Caco-2 (cell line): ENCODE measurements at regions of chr14 and their contacts with region 1.

Region 1: DNA sequence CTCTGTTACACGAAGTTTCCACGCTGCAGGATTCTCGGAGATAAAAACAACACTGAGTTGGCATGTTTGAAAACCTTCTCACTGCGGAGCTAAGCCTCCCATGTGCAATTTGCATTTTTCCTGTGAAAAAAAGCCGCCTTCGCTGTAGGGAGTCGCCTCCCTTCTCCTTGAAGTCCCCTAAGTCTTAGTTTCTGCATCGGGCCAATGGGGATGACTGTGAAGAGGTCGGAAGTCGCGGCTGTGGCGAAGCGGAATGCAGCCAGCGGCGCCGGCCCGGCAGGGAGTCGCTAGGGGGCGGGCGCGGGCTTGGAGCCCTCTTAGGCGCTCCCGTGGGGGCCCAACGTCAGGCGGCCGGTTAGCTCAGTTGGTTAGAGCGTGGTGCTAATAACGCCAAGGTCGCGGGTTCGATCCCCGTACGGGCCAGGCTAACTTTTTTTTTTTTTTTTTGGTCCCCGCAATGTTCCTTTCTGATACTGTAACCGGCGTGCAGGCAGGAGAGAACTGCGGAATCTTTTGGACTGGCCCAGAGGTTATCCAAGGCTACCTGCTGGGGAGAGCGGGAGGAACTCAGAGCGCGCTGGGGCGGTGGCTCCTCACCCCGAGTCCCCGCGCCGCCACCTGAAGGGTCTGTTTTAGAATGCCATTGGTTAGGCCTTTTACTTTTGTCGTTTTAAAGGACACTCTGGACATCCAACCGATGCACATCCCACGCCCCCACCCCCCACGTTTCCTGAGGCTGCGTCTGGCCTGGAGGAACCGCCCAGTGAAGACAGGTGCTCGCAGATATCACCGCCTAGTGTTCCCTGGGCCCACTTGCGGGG is 2.6 kb upstream of the ZNF839 start:
- DNase-seq: peak; percentile 93 to 96
- H3K4me3 ChIP-seq: peak overlapping the region; percentile 55
- H3K4me3 Mint-ChIP-seq: peak overlapping the region; percentile 89
- H3K27ac Mint-ChIP-seq: peak overlapping the region; percentile 94
- H3K4me1 ChIP-seq: peaks cover 30% of the 10 kb centered on the region
- H3K4me1 Mint-ChIP-seq: peaks cover 32% of the 10 kb centered on the region
- H3K27me3 ChIP-seq: no peaks in the 10 kb centered on the region
- H3K27me3 Mint-ChIP-seq: no peaks in the 10 kb centered on the region
- CTCF ChIP-seq: peak; percentile 72 to 88

Region 2: DNA sequence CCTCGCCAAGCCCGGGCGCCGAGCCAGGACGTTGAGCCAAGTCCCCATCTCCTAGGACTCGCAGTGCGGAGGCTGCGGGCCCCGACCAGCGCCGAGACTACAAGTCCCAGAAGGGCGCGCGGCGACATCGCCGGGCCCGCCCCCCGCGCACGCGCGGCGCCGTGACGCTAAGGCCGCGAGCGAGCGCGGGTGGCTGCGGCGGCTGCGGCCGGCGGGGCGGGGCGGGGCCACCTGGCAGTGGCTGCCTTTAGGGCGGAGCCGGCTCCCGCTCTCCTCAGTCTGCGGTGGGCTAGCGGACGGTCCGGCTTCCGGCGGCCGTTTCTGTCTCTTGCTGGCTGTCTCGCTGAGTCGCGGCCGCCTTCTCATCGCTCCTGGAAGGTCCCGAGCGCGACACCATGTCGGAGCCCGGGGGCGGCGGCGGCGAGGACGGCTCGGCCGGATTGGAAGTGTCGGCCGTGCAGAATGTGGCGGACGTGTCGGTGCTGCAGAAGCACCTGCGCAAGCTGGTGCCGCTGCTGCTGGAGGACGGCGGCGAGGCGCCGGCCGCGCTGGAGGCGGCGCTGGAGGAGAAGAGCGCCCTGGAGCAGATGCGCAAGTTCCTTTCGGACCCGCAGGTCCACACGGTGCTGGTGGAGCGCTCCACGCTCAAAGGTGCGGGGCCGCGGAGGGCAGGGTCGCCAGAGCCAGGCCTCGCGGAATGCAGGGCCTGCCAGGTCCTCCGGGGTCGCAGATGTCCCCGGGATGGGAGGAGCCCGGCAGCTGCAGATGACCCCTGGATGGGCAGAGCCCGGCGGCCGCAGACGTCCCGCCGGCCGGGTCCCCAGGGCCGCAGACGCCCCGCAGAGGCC is 352.4 kb before region 1 on chr14 and contains the start of gene DYNC1H1:
- CTCF ChIA-PET with region 1: interaction called, 4 read pairs
- POLR2A ChIA-PET with region 1: no interaction called
- intact Hi-C with region 1: loop called (anchors 5 kb)
- DNase-seq: peak; percentile 84 to 93
- H3K4me3 ChIP-seq: peak within 1 kb of the TSS; percentile 84
- H3K4me3 Mint-ChIP-seq: peak within 1 kb of the TSS; percentile 79
- H3K27ac Mint-ChIP-seq: peak within 1 kb of the TSS; percentile 42
- H3K4me1 ChIP-seq: peaks cover 21% of the 10 kb centered on the region
- H3K4me1 Mint-ChIP-seq: peaks cover 12% of the 10 kb centered on the region
- H3K27me3 ChIP-seq: no peaks in the 10 kb centered on the region
- H3K27me3 Mint-ChIP-seq: no peaks in the 10 kb centered on the region
- CTCF ChIP-seq: no peak
- total RNA-seq, gene DYNC1H1: 349 and 351 TPM in 2 replicates

Region 3: GRCh38 chr14:102078831-102079699 is 237.9 kb before region 1 on chr14:
- CTCF ChIA-PET with region 1: no interaction called
- POLR2A ChIA-PET with region 1: interaction called, 17 read pairs
- intact Hi-C with region 1: no loop called
- DNase-seq: no peak
- H3K4me3 ChIP-seq: no peak overlapping the region
- H3K4me3 Mint-ChIP-seq: no peak overlapping the region
- H3K27ac Mint-ChIP-seq: no peak overlapping the region
- H3K4me1 ChIP-seq: 0 out of 2 replicates have a peak, but pooled peaks cover 6% of the 10 kb centered on the region
- H3K4me1 Mint-ChIP-seq: no peaks in the 10 kb centered on the region
- H3K27me3 ChIP-seq: no peaks in the 10 kb centered on the region
- H3K27me3 Mint-ChIP-seq: no peaks in the 10 kb centered on the region
- CTCF ChIP-seq: no peak

Region 4: DNA sequence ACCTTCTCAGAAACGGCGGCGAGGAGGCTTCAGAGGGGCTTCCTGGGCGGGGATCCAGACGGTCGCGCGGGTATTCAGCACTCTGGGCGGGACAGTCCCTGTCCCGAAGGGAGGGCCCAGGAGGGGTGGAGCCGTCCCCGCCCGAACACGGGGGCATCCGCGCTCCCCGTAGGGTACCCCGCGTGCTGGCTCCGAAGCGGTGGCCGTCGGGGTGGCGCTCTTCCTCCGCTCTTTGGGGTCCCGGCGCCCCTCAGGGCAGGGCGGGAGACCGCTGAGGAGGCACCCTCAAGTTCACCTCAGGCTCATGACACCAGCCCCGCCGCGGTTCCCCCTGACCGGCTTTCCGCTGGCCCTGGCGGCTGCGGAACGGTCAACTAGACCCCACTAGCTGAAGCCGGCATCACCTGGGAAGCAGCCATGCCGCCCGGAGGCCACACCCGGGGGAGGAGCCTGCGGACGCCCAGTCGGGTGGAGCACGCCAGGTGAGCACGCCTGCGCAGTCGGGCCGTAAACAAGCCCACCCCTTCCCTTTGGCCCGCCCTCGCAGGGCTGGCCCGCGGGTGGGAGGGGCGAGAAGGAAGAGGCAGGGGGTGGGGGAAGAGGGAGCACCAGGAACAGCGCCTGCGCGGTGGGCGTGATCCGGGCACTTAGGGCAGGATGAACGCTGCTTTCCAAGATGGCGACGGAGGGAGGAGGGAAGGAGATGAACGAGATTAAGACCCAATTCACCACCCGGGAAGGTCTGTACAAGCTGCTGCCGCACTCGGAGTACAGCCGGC is 177.5 kb before region 1 on chr14 and contains the start of gene WDR20:
- CTCF ChIA-PET with region 1: no interaction called
- POLR2A ChIA-PET with region 1: no interaction called
- intact Hi-C with region 1: loop called (anchors 5 kb)
- DNase-seq: peak; percentile 99
- H3K4me3 ChIP-seq: peak within 1 kb of the TSS; percentile 96
- H3K4me3 Mint-ChIP-seq: peak within 1 kb of the TSS; percentile 98
- H3K27ac Mint-ChIP-seq: peak within 1 kb of the TSS; percentile 91
- H3K4me1 ChIP-seq: peaks cover 6% of the 10 kb centered on the region; the same call in 1 of the 2 replicates
- H3K4me1 Mint-ChIP-seq: peaks cover 11% of the 10 kb centered on the region
- H3K27me3 ChIP-seq: no peaks in the 10 kb centered on the region
- H3K27me3 Mint-ChIP-seq: no peaks in the 10 kb centered on the region
- CTCF ChIP-seq: peak in 1 of 2 experiments; percentile 19
- total RNA-seq, gene WDR20: 32.5 and 34.0 TPM in 2 replicates

Region 5: DNA sequence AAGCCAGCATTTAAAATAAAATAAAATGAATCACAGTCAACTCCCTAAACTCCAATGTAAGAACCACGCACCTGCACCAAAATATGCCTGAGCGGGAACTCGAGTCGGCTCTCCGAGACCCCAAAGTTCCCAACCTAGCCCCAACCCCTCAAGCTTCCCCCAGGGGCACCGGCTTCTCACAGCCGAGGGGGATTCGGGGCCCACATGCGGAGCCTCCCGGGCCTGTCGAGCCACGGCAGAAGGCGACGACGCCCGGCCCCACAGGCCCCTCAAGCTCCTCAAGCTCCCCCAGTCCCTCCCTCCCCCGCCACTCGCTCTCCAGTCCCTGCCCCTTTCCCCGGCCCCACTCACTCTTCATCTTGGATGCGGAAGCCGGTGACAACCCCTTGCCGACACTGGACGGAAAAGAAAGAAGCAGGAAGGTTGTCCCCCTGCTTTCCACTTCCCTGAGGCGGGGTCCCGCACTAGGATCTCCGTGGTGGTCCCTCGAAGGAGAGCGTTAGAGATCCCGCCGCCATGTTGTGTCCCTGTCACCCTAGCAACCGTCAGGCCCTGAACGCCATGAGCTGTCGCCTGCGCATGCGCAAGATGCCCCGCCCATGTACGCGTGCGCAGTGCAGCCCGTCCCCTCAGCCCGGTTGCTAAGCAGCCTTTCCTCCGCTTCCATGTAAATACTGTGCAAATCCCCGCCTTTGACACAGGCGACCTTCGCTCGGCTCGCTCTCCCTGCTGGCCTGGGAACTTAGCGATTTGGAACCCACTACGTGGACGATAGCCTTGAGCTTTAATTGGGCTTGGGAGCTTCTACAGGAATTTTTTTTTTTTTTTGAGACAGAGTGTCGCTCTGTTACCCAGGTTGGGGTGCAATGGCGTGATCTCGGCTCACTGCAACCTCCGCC is 12.1 kb before region 1 on chr14 and contains the start of gene MOK:
- CTCF ChIA-PET with region 1: interaction called, 17 read pairs
- POLR2A ChIA-PET with region 1: interaction called, 3 read pairs
- intact Hi-C with region 1: no loop called
- DNase-seq: peak; percentile 96 to 99
- H3K4me3 ChIP-seq: peak within 1 kb of the TSS; percentile 80
- H3K4me3 Mint-ChIP-seq: peak within 1 kb of the TSS; percentile 96
- H3K27ac Mint-ChIP-seq: peak within 1 kb of the TSS; percentile 97
- H3K4me1 ChIP-seq: 0 out of 2 replicates have a peak, but pooled peaks cover 3% of the 10 kb centered on the region
- H3K4me1 Mint-ChIP-seq: no peaks in the 10 kb centered on the region
- H3K27me3 ChIP-seq: no peaks in the 10 kb centered on the region
- H3K27me3 Mint-ChIP-seq: peaks cover 9% of the 10 kb centered on the region
- CTCF ChIP-seq: no peak
- total RNA-seq, gene MOK: 1.4 and 2.0 TPM in 2 replicates

Region 6: GRCh38 chr14:102540315-102541029 is 223.5 kb after region 1 on chr14:
- CTCF ChIA-PET with region 1: no interaction called
- POLR2A ChIA-PET with region 1: interaction called, 10 read pairs
- intact Hi-C with region 1: no loop called
- DNase-seq: no peak
- H3K4me3 ChIP-seq: no peak overlapping the region
- H3K4me3 Mint-ChIP-seq: no peak overlapping the region
- H3K27ac Mint-ChIP-seq: no peak overlapping the region
- H3K4me1 ChIP-seq: peaks cover 18% of the 10 kb centered on the region
- H3K4me1 Mint-ChIP-seq: peaks cover 6% of the 10 kb centered on the region
- H3K27me3 ChIP-seq: no peaks in the 10 kb centered on the region
- H3K27me3 Mint-ChIP-seq: no peaks in the 10 kb centered on the region
- CTCF ChIP-seq: no peak